ENCODE measurements at regions of chr4 and their contacts with region 1.

Region 1: DNA sequence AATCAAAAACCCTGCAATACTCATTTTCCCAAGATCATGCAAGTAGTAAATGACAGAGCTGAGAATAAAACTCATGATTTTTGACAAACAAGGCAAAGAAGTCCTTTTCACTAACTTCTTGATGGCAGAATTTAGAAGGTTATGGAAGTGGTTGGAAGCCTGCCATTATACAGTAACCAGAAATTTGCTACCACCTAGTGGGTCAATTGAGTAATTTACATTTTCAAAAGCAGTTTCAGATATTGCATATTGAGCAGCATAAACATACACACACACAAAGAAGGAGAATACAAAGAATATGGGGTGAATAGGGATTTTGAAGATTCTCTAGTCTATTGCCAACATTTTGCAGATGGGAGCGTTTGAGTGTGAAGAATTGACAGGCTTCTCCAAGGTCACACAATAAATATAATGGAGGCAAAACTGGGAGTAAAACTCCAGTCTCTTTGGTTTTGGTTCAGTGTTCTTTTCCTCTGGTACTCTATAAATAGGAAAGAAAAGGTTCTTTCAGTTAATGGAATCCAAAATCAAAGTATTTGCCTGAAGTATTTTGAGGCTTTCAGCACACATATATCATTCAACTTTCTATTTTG is 70.2 kb downstream of the GC start:
- DNase-seq: peak in 3 of 14 experiments; percentile 39 to 47 (median 42)
- ATAC-seq: no peak
- H3K4me3 ChIP-seq: no peak overlapping the region
- H3K4me3 Mint-ChIP-seq: no peak overlapping the region
- H3K27ac ChIP-seq: no peak overlapping the region
- H3K27ac Mint-ChIP-seq: no peak overlapping the region
- H3K4me1 ChIP-seq: no peaks in the 10 kb centered on the region
- H3K4me1 Mint-ChIP-seq: no peaks in the 10 kb centered on the region
- H3K27me3 ChIP-seq: no peaks in the 10 kb centered on the region
- H3K27me3 Mint-ChIP-seq: no peaks in the 10 kb centered on the region
- CTCF ChIP-seq: peak; percentile 63

Region 2: DNA sequence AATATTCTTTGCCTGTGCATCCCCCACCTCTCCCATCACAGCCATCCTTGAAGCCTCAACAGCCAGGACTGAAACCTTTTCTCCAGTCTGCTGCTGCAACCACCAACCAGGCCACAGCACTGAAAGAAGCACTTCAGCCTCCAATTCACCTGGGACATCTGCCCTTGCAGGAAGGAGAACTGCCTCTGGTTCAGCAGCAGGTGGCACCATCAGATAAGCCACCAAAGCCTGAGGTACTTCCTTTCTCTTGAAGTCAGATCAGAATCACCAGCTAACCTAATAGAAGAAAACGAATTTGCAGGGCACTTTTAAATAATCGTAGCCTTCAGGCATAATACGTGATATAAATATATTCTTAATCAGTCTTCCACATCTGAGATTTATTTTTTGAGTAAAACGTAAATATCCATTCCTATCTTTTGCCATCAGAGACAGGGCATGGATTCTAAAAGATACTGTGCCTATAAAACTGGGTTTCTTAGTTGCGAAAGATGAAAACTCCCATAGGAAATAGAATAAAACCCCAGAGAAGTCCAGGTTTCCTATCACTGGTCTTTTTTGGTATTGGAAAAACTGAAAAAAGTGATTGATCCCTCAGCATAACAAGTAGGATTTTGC is 1112.2 kb before region 1 on chr4:
- CTCF ChIA-PET with region 1: no interaction called
- POLR2A ChIA-PET with region 1: no interaction called
- intact Hi-C with region 1: loop called (anchors 1 kb)
- DNase-seq: peak; percentile 40 to 82 (median 55)
- ATAC-seq: peak; percentile 80
- H3K4me3 ChIP-seq: no peak overlapping the region
- H3K4me3 Mint-ChIP-seq: no peak overlapping the region
- H3K27ac ChIP-seq: no peak overlapping the region
- H3K27ac Mint-ChIP-seq: no peak overlapping the region
- H3K4me1 ChIP-seq: no peaks in the 10 kb centered on the region
- H3K4me1 Mint-ChIP-seq: no peaks in the 10 kb centered on the region
- H3K27me3 ChIP-seq: no peaks in the 10 kb centered on the region
- H3K27me3 Mint-ChIP-seq: peaks cover 4% of the 10 kb centered on the region
- CTCF ChIP-seq: peak; percentile 75

Region 3: DNA sequence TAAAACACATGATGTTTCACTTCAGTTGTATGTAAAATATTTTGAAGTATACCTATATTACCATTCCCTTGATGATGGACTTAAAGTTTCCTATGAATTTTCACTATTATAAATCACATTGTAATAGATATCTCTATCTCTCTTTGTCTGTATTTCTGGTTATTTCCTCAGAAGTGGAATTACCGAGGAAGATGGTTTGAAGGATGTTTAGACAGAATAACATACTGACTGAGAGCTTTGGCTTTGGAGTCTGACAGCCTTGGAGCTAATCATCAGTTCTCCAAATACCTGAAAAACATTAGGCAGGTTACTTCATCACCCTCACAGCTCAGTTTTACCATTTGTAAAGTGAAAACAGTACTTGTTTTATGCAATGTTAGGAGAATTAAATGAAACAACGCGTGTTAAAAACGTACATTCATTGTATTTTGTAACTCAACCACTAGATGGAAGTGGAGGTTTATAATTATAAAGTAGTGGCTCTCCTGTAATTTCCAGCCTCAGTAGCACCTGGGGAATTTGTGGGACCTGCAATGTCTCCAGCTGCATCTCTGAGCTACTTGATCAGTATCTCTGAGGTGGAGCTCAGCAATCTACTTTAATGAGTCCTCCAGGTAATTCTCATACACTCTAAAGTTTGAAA is 1061.7 kb before region 1 on chr4:
- CTCF ChIA-PET with region 1: no interaction called
- POLR2A ChIA-PET with region 1: no interaction called
- intact Hi-C with region 1: loop called in 1 of 2 experiments (anchors 2 kb)
- DNase-seq: peak in 4 of 14 experiments; percentile 4 to 56 (median 54)
- ATAC-seq: peak; percentile 56
- H3K4me3 ChIP-seq: no peak overlapping the region
- H3K4me3 Mint-ChIP-seq: no peak overlapping the region
- H3K27ac ChIP-seq: no peak overlapping the region
- H3K27ac Mint-ChIP-seq: no peak overlapping the region
- H3K4me1 ChIP-seq: no peaks in the 10 kb centered on the region
- H3K4me1 Mint-ChIP-seq: peaks cover 4% of the 10 kb centered on the region
- H3K27me3 ChIP-seq: no peaks in the 10 kb centered on the region
- H3K27me3 Mint-ChIP-seq: peaks cover 11% of the 10 kb centered on the region
- CTCF ChIP-seq: peak; percentile 71

Region 4: DNA sequence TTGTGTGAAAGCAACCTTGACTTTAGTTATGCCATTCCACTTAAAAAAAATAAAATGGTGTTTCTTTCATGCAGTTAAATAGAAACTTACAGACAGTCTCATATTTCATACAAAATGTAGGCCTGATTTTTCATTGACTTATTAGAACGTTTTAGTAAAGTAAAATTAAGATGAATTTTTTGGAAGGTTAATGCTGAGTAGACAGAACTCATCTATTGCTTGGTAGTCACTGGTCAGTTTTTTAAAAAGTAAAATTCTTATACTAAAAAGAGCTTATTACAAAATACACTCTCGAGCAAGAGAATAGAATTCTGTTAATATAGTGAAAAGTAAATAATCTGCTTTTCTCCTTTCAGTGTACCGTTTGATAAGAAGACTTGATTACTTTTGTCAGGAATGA is 833.0 kb before region 1 on chr4:
- CTCF ChIA-PET with region 1: no interaction called
- POLR2A ChIA-PET with region 1: no interaction called
- intact Hi-C with region 1: loop called in 1 of 2 experiments (anchors 5 kb)
- DNase-seq: no peak
- ATAC-seq: no peak
- H3K4me3 ChIP-seq: no peak overlapping the region
- H3K4me3 Mint-ChIP-seq: no peak overlapping the region
- H3K27ac ChIP-seq: no peak overlapping the region
- H3K27ac Mint-ChIP-seq: no peak overlapping the region
- H3K4me1 ChIP-seq: no peaks in the 10 kb centered on the region
- H3K4me1 Mint-ChIP-seq: no peaks in the 10 kb centered on the region
- H3K27me3 ChIP-seq: no peaks in the 10 kb centered on the region
- H3K27me3 Mint-ChIP-seq: no peaks in the 10 kb centered on the region
- CTCF ChIP-seq: no peak

Region 5: GRCh38 chr4:70979445-70980008 is 734.2 kb before region 1 on chr4:
- CTCF ChIA-PET with region 1: no interaction called
- POLR2A ChIA-PET with region 1: no interaction called
- intact Hi-C with region 1: loop called in 1 of 2 experiments (anchors 5 kb)
- DNase-seq: no peak
- ATAC-seq: no peak
- H3K4me3 ChIP-seq: no peak overlapping the region
- H3K4me3 Mint-ChIP-seq: no peak overlapping the region
- H3K27ac ChIP-seq: no peak overlapping the region
- H3K27ac Mint-ChIP-seq: no peak overlapping the region
- H3K4me1 ChIP-seq: no peaks in the 10 kb centered on the region
- H3K4me1 Mint-ChIP-seq: no peaks in the 10 kb centered on the region
- H3K27me3 ChIP-seq: no peaks in the 10 kb centered on the region
- H3K27me3 Mint-ChIP-seq: no peaks in the 10 kb centered on the region
- CTCF ChIP-seq: no peak

Region 6: DNA sequence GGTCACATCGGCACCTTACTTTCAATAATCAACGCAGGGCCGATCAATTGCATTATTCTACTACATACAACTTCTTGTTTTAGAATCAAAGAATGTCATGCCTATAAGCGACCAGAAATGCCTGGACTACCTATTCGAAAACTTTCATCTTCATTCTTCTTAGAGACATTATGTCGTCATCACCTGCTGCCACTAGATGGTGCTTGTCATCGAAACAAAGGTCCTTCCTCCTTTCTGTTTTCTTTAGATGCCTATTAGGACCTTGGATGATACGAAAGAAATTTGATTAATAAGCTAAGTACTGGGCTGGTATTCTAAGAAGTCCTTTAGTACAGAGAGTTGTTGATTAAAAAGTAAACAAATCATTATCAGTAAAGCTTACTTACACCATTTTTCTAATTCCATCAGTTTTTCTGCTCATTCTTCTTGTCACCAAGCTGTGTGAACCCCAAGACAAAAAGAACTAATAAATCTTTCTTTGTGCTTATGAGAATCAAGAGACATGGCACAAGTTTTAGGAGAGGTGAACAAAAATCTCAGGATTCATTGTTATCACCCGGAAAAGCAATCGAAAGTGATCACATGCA is 529.4 kb before region 1 on chr4:
- CTCF ChIA-PET with region 1: no interaction called
- POLR2A ChIA-PET with region 1: no interaction called
- intact Hi-C with region 1: loop called in 1 of 2 experiments (anchors 10 kb)
- DNase-seq: peak in 8 of 14 experiments; percentile 1 to 72 (median 30)
- ATAC-seq: peak; percentile 36
- H3K4me3 ChIP-seq: no peak overlapping the region
- H3K4me3 Mint-ChIP-seq: peak overlapping the region; percentile 18
- H3K27ac ChIP-seq: no peak overlapping the region
- H3K27ac Mint-ChIP-seq: no peak overlapping the region
- H3K4me1 ChIP-seq: peaks cover 15% of the 10 kb centered on the region
- H3K4me1 Mint-ChIP-seq: peaks cover 32% of the 10 kb centered on the region
- H3K27me3 ChIP-seq: peaks cover 11 to 36% of the 10 kb centered on the region in 2 experiments
- H3K27me3 Mint-ChIP-seq: peaks cover 43% of the 10 kb centered on the region
- CTCF ChIP-seq: peak; percentile 69

Region 7: GRCh38 chr4:71259911-71260331 is 453.8 kb before region 1 on chr4:
- CTCF ChIA-PET with region 1: no interaction called
- POLR2A ChIA-PET with region 1: no interaction called
- intact Hi-C with region 1: no loop called
- DNase-seq: peak in 3 of 14 experiments; percentile 15 to 25 (median 19)
- ATAC-seq: no peak
- H3K4me3 ChIP-seq: no peak overlapping the region
- H3K4me3 Mint-ChIP-seq: no peak overlapping the region
- H3K27ac ChIP-seq: no peak overlapping the region
- H3K27ac Mint-ChIP-seq: no peak overlapping the region
- H3K4me1 ChIP-seq: no peaks in the 10 kb centered on the region
- H3K4me1 Mint-ChIP-seq: peaks cover 10% of the 10 kb centered on the region
- H3K27me3 ChIP-seq: no peaks in the 10 kb centered on the region
- H3K27me3 Mint-ChIP-seq: no peaks in the 10 kb centered on the region
- CTCF ChIP-seq: no peak

Measured in CD4-positive, alpha-beta T cell (primary cell).